ENCODE measurements at regions of chr6 and their contacts with region 1.

Region 1: DNA sequence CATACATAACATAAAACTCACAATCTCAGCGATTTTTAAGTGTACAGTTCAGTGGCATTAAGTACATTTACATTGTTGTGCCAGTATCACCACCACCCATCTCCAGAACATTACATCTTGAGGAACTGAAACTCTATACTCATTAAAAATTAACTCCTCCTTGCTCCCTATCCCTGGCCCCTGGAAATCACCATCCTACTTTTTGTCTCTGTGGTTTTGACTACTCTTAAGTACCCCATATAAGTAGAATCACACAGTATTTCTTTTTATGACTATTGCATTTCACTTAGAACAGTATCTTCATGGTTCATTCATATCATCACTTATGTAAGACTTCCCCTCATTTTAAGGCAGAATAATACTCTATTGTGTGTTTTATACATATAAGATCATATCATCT is 1108.1 kb downstream of the GRIK2 start:
- DNase-seq: no peak
- H3K4me3 ChIP-seq: no peak overlapping the region
- H3K27ac ChIP-seq: no peak overlapping the region
- H3K4me1 ChIP-seq: no peaks in the 10 kb centered on the region
- H3K27me3 ChIP-seq: no peaks in the 10 kb centered on the region
- CTCF ChIP-seq: no peak

Region 2: DNA sequence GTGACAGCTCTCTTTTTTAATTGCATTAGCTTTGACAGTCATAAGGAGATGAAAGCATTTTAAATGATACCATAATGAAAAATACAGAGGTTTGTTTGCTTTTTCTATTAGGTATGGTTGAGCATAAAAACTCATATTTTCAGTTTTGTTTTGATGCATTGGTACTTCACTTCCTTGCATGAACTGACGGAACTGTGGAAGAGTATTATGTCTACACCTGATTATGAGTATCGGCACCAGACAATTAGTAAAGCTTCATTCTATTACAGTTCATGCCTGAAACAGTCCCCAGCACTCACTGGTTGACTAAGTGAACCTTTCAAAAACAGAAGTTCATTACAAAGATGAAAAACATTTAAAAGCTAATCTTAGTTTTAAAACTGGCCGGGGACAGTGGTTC is 515.1 kb before region 1 on chr6:
- CTCF ChIA-PET with region 1: no interaction called
- POLR2A ChIA-PET with region 1: interaction called, 22 read pairs
- intact Hi-C with region 1: no loop called
- DNase-seq: no peak
- H3K4me3 ChIP-seq: no peak overlapping the region
- H3K27ac ChIP-seq: no peak overlapping the region
- H3K4me1 ChIP-seq: no peaks in the 10 kb centered on the region
- H3K27me3 ChIP-seq: no peaks in the 10 kb centered on the region
- CTCF ChIP-seq: no peak